ENCODE measurements at regions of chr1 and their contacts with region 1.

Region 1: DNA sequence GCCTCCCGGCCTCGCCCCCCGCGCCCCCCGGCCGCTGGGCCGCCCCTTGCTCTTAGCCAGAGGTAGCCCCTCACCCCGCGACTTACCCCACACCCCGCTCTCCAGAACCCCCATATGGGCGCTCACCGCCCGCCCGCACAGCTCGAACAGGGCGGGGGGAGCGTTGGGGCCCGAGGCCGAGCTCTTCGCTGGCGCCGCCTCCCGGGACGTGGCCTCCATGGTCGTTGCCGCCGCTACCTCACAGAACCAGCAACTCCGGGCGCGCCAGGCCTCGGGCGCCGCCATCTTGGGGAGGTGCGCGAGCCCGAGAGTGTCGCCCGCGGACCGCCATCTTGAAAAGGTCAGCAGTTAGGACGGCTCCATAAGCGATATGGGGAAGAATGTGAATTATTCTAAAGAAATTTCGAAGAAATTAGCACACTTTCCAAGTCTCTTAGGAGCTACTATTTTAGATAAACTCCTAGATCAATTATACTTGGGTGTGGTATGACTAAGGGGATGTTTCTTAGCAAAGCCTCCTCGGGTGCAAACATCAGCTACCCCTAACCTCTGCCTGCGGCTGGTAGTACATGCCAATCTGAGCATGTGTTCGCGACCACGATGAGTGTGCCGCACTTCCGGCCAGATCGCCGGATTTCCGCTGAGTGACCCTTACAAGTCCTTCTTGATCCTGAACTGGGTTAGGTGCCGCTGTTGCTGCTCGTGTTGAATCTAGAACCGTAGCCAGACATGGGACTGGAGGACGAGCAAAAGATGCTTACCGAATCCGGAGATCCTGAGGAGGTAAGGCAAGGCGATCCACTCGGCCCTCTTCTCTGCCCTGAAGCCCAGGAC is at the starts of genes LRRC41 and UQCRH:
- DNase-seq: peak; percentile 93
- ATAC-seq: peak; percentile 83
- H3K4me3 ChIP-seq: peak within 1 kb of the TSS; percentile 98
- H3K27ac ChIP-seq: peak within 1 kb of the TSS; percentile 91
- H3K4me1 ChIP-seq: peaks cover 15% of the 10 kb centered on the region
- H3K27me3 ChIP-seq: no peaks in the 10 kb centered on the region
- CTCF ChIP-seq: 0 out of 6 replicates have a peak, but pooled peaks of 1 of the 3 experiments have one; percentile 1
- EP300 ChIP-seq: no peak
- POLR2A ChIP-seq: peak; percentile 93
- RAD21 ChIP-seq: no peak
- polyA plus RNA-seq, gene LRRC41: 12.0 to 12.6 TPM
- polyA plus RNA-seq, gene UQCRH: 1,451 to 1,539 TPM

Region 2: DNA sequence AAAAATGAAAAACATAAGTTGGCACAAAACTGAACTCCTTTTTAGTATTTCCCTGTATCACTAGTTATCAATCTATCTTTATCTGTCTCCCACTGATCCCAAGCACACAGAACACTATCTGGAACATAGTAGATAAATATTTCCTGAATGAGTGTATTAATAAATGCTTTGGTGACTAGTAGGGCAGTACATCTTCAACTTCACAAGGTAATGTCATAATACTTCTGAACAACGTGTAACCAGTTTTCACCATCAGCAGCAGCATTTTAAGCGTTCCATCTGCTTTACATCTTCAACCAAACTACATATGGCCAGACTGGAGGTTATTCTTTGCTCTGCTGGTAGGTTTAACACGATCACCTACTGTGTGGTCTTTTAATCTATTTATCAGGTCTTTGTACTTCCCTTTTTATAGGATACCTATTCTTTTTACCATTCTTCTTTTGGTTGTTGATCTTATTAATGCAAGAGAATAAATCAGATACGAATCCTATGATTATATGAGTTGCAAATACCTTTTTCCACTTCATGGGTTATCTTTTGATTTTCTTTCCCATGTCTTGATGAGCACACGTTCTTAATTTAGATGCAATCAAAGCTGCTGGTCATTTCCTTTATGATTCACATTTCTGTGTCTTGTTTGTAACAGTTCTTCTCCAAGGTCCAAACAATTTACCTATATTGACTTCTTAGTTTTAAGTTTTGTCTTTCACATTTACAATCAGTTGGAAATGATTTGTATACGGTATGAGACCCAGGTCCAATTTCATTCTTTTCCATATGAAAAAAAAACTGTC is 633.2 kb before region 1 on chr1:
- CTCF ChIA-PET with region 1: no interaction called
- POLR2A ChIA-PET with region 1: no interaction called
- RAD21 ChIA-PET with region 1: no interaction called
- SMC1A ChIA-PET with region 1: no interaction called
- in situ Hi-C with region 1: no loop called
- intact Hi-C with region 1: no loop called
- DNase-seq: no peak
- ATAC-seq: no peak
- H3K4me3 ChIP-seq: no peak overlapping the region
- H3K27ac ChIP-seq: no peak overlapping the region
- H3K4me1 ChIP-seq: no peaks in the 10 kb centered on the region
- H3K27me3 ChIP-seq: no peaks in the 10 kb centered on the region
- CTCF ChIP-seq: no peak
- EP300 ChIP-seq: no peak
- POLR2A ChIP-seq: no peak
- RAD21 ChIP-seq: no peak

Region 3: DNA sequence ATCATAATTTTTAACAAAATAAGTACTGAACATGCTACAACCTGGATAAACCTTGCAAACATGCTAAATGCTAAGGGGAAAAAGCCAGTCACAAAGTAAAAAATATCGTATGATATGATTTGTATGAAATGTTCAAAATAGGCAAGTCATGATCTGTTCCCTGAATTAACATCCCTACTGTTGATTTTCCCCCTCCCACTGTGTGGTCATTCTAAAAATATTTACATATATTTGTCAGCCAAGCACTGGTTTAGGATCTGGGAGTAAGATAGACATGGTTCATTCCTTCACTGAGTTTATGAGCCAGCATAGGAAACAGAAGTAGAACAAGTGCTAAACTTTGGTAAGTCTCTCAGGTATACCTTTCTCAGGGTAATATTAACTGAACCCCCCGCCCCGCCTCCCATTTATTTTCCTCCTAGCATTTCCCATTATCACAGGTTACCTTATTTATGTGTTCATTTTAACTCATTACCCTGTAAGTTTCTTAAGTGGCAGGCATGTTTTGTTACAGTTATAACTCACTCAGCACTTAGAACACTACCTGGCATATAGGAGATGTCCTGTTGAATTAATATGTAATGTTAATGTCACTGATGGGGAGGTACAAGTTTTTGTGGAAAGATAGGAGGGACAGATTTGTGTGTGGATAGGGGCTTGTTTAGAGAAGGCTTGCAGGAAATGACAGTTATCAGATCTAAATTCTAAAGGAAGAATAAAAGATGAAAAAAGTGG is 12.6 kb after region 1 on chr1:
- CTCF ChIA-PET with region 1: interaction called, 19 read pairs
- POLR2A ChIA-PET with region 1: interaction called, 18 read pairs
- RAD21 ChIA-PET with region 1: interaction called, 8 read pairs
- SMC1A ChIA-PET with region 1: interaction called, 26 read pairs
- in situ Hi-C with region 1: no loop called
- intact Hi-C with region 1: no loop called
- DNase-seq: no peak
- ATAC-seq: no peak
- H3K4me3 ChIP-seq: no peak overlapping the region
- H3K27ac ChIP-seq: no peak overlapping the region
- H3K4me1 ChIP-seq: no peaks in the 10 kb centered on the region
- H3K27me3 ChIP-seq: no peaks in the 10 kb centered on the region
- CTCF ChIP-seq: no peak
- EP300 ChIP-seq: no peak
- POLR2A ChIP-seq: no peak
- RAD21 ChIP-seq: no peak

Region 4: GRCh38 chr1:46333300-46334029 is 30.2 kb after region 1 on chr1:
- CTCF ChIA-PET with region 1: interaction called, 59 read pairs
- POLR2A ChIA-PET with region 1: interaction called, 37 read pairs
- RAD21 ChIA-PET with region 1: interaction called, 48 read pairs
- SMC1A ChIA-PET with region 1: interaction called, 46 read pairs
- in situ Hi-C with region 1: no loop called
- intact Hi-C with region 1: loop called (anchors 2 kb)
- DNase-seq: peak; percentile 77
- ATAC-seq: peak; percentile 58
- H3K4me3 ChIP-seq: peak overlapping the region; percentile 16; the same call in 1 of the 2 replicates
- H3K27ac ChIP-seq: peak overlapping the region; percentile 98
- H3K4me1 ChIP-seq: peaks cover 22% of the 10 kb centered on the region
- H3K27me3 ChIP-seq: no peaks in the 10 kb centered on the region
- CTCF ChIP-seq: peak; percentile 49 to 73 (median 53)
- EP300 ChIP-seq: 0 out of 4 replicates have a peak, but pooled peaks of 1 of the 2 experiments have one; percentile 17
- POLR2A ChIP-seq: peak; percentile 77
- RAD21 ChIP-seq: peak; percentile 70

Region 5: GRCh38 chr1:46340404-46341221 is 37.4 kb after region 1 on chr1 and contains the start of gene NSUN4:
- CTCF ChIA-PET with region 1: interaction called, 181 read pairs
- POLR2A ChIA-PET with region 1: interaction called, 45 read pairs
- RAD21 ChIA-PET with region 1: interaction called, 49 read pairs
- SMC1A ChIA-PET with region 1: interaction called, 30 read pairs
- in situ Hi-C with region 1: loop called (anchors 5 kb)
- intact Hi-C with region 1: loop called (anchors 1 kb)
- DNase-seq: peak; percentile 69
- ATAC-seq: peak; percentile 85
- H3K4me3 ChIP-seq: peak within 1 kb of the TSS; percentile 80
- H3K27ac ChIP-seq: peak within 1 kb of the TSS; percentile 97
- H3K4me1 ChIP-seq: peaks cover 16% of the 10 kb centered on the region; the same call in 1 of the 2 replicates
- H3K27me3 ChIP-seq: no peaks in the 10 kb centered on the region
- CTCF ChIP-seq: peak; percentile 64 to 87 (median 70)
- EP300 ChIP-seq: no peak; a peak in 1 of 4 replicates
- POLR2A ChIP-seq: peak; percentile 90
- RAD21 ChIP-seq: peak; percentile 20; the same call in 1 of the 2 replicates
- polyA plus RNA-seq, gene NSUN4: 22.1 to 26.6 TPM

Measured in GM12878 (cell line).